Brain microvascular endothelial cell (primary cell): ENCODE measurements at regions of chr4 and their contacts with region 1.

Region 1: DNA sequence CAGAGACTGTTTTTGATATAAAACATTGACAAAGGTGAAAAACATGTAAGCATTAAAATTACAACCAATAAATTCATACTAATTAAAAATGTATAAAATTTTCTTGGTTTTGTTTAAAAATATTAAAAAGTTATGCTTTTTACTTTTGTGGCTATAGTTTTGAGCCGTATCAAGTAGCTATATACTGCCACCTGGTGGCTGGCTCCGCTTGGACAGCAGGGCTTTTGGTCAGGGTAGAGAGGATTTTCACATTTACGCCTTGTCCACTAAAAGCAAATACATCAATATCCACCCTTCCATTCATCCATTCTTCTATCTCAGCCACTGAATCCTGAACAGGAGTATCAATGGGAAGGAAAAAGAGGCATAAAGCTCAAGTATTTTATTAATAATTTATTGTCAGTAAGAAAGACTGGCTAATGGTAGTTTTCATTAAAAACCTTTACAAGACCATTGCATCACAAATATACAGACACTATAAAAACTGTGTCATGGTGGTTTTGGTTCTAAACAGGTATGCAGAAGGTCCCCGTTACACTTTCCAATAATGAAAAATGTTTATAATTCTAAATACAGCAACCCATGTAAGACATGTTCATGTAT is 32.1 kb upstream of the MTNR1A start:
- DNase-seq: peak; percentile 63
- H3K4me3 ChIP-seq: no peak overlapping the region
- H3K27ac ChIP-seq: no peak overlapping the region
- H3K27me3 ChIP-seq: no peaks in the 10 kb centered on the region
- CTCF ChIP-seq: peak; percentile 91

Region 2: DNA sequence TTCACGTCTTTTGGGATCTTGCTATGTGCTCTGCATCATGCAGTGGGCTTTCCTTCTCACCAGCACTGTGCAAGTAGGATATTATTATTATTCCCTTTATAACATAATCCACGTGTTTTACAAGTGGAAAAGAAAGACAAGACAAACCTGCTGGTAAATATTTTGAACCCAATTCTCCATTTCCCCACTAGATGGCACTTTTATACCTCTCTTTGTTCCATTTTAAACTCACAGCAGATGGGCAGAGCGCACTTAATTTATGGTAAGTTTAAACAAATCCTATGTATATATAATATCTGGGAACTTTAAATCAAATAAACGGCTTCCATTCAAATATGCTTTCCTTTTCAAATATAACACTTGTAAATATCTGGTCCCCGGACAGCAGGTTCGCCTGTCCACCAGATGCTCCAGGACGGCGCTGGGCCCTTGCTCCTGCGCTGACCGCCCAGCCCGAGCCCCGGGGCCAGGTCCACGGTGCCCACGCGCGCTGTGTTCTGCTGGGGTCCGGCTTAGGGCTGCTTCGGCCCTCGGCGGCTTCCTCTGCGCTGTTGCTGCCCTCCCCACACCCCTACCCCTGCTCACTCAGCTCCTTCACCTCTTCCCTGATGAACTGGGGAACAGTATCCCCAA is 290.4 kb before region 1 on chr4:
- in situ Hi-C with region 1: loop called (anchors 25 kb)
- DNase-seq: peak; percentile 48
- H3K4me3 ChIP-seq: no peak overlapping the region
- H3K27ac ChIP-seq: no peak overlapping the region
- H3K27me3 ChIP-seq: no peaks in the 10 kb centered on the region
- CTCF ChIP-seq: peak; percentile 52

Region 3: DNA sequence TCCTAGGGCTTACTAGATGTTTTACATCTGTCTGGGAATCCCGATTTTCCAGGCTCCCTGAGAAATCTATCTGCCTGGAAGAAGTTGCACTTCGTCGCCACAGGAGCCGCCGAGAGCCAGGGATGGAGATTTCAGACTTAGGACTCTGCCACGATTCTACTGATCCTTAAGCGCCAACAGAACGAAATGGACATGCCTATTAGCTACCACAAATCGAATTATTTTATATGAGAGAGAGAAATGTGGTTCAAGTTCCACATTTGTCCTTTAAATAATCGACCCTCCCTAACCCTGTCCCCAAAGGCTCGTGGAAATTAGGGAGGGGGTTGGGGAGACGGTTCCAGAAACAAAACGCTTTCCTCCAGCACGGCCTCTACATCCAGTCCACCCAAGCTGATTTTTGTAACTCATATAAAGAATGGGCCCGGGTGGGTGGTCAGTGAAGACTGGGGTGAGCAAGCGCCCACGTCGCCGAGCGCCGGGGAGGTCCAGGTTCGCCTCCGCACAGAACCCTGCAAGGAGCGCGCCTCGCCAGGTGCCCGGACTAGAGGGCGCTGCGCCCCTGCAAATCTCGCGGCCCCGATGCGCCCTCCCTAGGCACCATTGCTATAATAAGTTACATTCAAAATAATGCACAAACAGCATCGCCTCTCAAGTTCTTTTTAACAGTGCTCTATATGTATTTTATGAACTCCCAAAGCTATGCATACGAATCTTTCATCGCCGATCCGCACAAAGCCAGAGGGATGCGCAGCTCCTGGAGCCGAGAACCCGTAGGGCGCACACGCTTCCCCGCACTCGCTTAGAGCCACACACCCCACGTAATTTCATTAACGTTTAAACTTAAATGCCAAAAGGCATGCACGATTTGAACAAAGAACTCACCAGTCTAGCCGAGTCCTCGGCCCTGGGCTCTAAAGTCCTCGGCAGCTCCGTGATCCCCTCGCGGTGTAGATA is 138.2 kb after region 1 on chr4:
- in situ Hi-C with region 1: no loop called
- DNase-seq: peak; percentile 83
- H3K4me3 ChIP-seq: peak overlapping the region; percentile 70
- H3K27ac ChIP-seq: peak overlapping the region; percentile 96
- H3K27me3 ChIP-seq: no peaks in the 10 kb centered on the region
- CTCF ChIP-seq: peak; percentile 85